ENCODE measurements at regions of chr10 and their contacts with region 1.

Region 1: DNA sequence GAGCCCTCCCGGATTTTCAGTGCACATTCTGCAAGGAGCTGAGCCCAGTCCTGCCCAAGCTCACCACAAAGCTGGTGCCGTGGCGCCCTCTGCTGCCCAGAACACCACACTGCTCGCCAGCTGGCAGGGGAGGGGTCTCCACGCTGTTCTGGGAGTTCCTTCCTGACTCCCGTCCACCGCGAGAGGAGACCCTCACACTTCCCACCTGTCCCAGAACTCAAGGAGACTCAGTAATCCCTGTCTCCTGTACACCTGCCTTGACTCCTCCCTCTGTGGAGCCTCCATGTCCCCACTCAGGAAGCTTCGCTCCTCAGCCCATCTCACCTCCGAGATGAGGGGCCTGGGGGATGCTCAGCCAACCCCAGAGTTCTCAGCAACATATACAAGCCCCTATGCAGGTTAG is 11.3 kb downstream of the C10orf105 start:
- DNase-seq: peak; percentile 78
- CTCF ChIP-seq: peak; percentile 87

Region 2: DNA sequence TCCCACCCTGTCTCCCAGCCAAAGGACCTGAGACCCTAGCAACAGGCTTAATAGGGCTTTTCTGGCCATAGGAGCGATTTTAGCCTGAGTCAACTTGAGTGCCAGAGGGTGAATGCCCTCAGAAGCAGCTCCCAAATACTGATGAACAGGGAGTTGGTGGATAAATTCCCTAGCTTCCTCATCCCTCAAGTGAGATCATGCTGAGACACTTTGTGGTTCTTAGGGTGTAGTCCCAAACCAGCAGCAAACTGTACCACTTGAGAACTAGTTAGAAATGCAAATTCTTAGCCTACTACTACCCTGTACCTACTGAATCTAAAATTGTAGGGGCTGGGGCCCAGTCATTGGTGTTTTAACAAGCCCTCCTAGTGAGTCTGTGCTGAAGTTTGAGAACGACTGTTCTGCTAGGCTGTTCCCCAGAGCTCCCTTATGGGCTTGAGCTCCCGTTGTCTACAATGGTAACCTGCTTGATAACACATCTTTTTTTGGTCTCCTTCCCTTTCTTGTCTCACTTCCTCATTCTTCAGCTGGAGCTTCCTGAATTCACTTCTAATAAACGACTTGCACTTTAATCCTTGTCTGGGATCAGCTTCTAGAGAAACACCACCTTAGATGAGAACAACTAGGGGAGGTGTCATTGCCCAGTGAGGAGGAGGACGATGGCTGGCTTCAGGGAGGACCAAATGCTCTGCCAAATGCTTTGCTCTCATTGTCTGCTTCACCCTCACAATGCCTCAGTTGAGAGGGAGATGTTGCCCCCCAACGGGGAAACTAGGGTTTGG is 329.8 kb before region 1 on chr10:
- CTCF ChIA-PET with region 1: interaction called, 32 read pairs
- POLR2A ChIA-PET with region 1: no interaction called
- DNase-seq: no peak
- CTCF ChIP-seq: no peak

Region 3: DNA sequence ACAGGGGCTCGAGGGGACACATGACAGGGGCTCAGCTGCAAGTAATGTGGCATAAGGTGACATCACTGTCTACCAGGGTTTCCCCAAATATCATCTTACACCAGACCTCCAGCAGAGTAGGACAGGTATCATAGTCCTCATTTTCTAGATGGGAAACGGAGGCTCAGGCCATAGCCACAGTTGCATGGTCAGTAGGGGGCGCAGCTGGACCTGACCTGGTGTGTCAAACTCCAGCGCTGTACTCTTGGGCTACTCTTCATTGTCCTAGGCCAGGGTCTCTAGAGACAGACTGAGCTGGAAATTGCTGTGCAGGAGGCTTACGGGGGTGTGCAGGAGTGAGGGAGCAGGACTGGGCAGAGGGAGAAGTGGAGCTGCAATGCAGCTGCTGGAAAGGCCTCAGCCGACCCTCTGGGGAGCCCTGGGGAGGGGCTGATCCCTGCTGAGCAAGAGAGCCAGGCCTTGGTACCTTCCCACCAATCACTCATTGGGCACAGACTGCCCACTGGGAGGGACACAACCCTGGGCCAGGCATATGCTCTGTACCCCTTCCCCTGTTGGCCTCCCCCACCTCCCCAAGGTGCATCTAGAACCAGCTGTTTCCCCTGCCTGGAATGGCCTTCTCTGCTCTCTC is 221.7 kb before region 1 on chr10:
- CTCF ChIA-PET with region 1: interaction called, 13 read pairs
- POLR2A ChIA-PET with region 1: no interaction called
- DNase-seq: peak; percentile 58
- CTCF ChIP-seq: peak; percentile 51

Region 4: DNA sequence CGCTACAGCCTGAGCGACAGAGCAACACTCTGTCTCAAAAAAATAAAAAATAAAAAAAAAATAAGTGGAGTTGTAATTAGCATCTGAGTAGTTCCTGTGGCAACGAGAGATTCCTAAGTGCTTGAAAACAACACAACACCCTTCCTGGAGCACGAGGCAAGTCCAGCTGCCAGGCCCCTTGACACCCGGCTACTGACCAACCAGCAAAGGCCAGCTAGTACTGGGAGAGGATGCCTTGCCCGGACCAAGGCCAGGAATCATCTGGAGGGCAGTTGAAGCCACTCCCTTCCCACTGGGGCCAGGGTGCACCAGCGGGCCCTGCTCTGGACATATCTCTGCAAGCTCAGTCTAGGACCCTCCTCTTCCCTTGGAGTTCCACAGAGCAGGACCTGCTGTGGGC is 10.7 kb after region 1 on chr10:
- CTCF ChIA-PET with region 1: interaction called, 23 read pairs
- POLR2A ChIA-PET with region 1: no interaction called
- DNase-seq: no peak
- CTCF ChIP-seq: no peak

Region 5: DNA sequence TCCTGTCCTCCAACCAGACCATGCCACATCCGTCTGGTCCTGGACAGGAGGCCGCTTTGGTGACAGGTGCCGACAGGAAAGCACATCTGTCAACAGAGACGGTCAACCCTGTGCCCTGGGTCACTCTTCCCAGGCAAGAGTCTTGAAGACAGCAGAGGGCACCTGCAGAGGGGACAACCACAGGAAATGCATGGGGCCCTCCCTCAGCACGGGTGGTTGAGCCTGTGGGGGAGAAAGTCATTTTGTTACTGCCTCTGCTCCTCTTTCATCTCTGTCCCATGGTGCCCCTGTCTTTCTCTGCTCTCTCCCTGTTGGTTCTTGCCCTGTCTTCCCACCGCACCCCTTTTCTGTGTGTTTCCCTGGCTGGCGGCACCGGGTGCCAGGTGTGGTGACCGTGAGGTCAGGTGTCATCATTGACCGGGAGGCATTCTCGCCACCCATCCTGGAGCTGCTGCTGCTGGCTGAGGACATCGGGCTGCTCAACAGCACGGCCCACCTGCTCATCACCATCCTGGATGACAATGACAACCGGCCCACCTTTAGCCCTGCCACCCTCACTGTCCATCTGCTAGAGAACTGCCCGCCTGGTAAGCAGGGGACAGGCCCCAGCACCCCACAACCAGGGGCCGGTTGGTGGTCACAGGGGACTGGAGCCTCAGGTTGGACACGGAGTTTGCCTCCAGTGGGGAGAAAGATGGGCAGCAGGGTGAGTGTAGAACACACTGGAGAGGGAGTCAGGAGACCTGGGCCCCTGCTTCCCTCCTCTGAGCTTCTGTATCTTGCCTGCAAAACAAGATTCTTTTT is 82.6 kb after region 1 on chr10:
- CTCF ChIA-PET with region 1: no interaction called
- POLR2A ChIA-PET with region 1: no interaction called
- DNase-seq: peak; percentile 65
- CTCF ChIP-seq: no peak

Measured in GM10248 (cell line).